ENCODE measurements at regions of chr2 and their contacts with region 1.

Region 1: DNA sequence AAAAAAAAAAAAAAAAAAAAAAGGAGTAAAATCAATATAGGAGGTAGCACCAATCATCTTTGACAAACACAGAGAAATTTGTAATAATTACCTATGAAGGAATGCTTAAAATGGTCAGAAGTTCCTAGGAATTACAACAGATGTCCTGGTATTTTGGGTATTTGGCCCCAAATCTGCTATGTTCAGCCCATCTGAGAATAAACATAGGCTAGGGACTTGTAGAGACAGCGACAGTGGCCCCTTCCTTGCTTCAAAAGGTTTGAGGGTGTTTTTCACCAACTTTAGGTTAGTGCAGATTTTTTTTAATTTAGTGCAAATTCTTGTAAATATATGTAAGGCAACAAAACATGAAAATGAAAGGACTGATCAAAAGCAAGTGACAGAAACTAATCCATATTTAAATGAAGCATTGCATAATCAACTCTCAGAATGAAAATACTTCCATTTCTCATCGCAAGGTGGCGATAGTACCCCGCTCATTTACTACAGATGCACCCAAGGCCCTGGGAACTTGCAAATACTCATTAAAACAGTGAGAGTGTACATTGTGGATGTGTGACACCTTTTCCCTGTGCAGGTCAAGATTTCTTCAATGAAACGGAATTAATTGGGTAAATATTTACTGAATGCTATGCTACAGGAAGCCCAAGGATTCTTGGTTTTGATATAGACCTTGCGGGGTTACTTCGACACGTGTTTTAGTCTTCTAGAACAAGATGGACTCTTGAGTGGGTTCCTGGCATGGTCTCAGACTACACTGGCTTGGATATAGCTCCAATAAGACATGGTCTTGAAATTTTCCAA is 44.6 kb downstream of the FAM124B start:
- DNase-seq: peak; percentile 19 to 68 (median 59)
- ATAC-seq: peak; percentile 82
- H3K4me3 ChIP-seq: no peak overlapping the region
- H3K4me3 Mint-ChIP-seq: no peak overlapping the region
- H3K27ac ChIP-seq: no peak overlapping the region
- H3K27ac Mint-ChIP-seq: no peak overlapping the region
- H3K4me1 ChIP-seq: no peaks in the 10 kb centered on the region
- H3K4me1 Mint-ChIP-seq: peaks cover 0 to 2% (median 0%) of the 10 kb centered on the region in 7 donors
- H3K27me3 ChIP-seq: no peaks in the 10 kb centered on the region
- H3K27me3 Mint-ChIP-seq: peaks cover 8 to 20% (median 9%) of the 10 kb centered on the region in 5 donors

Region 2: DNA sequence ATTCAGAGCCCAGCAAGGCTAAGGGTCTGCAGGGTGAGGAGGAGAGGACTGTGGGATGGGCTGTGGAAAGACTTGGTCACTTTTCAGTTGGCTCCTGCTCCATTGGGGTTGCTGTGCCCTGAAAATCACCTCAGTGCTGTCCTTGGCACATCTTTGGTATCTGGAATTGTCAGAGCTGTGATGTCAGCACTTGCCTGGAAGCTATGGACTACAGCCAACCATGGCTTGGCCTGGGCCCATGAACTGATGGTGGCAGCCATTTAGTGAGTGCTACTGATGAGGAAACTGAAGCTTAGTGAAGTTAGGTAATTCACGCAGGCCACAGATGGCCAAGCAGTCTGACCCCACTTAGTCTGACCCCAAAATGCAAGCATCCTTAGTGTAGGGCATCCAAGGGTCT is 196.4 kb before region 1 on chr2:
- CTCF ChIA-PET with region 1: no interaction called
- POLR2A ChIA-PET with region 1: no interaction called
- intact Hi-C with region 1: no loop called
- DNase-seq: no peak
- ATAC-seq: no peak
- H3K4me3 ChIP-seq: no peak overlapping the region
- H3K4me3 Mint-ChIP-seq: no peak overlapping the region
- H3K27ac ChIP-seq: no peak overlapping the region
- H3K27ac Mint-ChIP-seq: no peak overlapping the region
- H3K4me1 ChIP-seq: no peaks in the 10 kb centered on the region
- H3K4me1 Mint-ChIP-seq: peaks cover 0 to 2% (median 0%) of the 10 kb centered on the region in 7 donors
- H3K27me3 ChIP-seq: no peaks in the 10 kb centered on the region
- H3K27me3 Mint-ChIP-seq: peaks cover 6 to 20% (median 10%) of the 10 kb centered on the region in 5 donors

Region 3: GRCh38 chr2:224319455-224320149 is 37.7 kb before region 1 on chr2:
- CTCF ChIA-PET with region 1: no interaction called
- POLR2A ChIA-PET with region 1: no interaction called
- intact Hi-C with region 1: no loop called
- DNase-seq: no peak
- ATAC-seq: peak; percentile 34
- H3K4me3 ChIP-seq: no peak overlapping the region
- H3K4me3 Mint-ChIP-seq: no peak overlapping the region
- H3K27ac ChIP-seq: no peak overlapping the region
- H3K27ac Mint-ChIP-seq: no peak overlapping the region
- H3K4me1 ChIP-seq: no peaks in the 10 kb centered on the region
- H3K4me1 Mint-ChIP-seq: no peaks in the 10 kb centered on the region
- H3K27me3 ChIP-seq: no peaks in the 10 kb centered on the region
- H3K27me3 Mint-ChIP-seq: peaks cover 14 to 39% (median 20%) of the 10 kb centered on the region in 5 donors

Region 4: GRCh38 chr2:224449212-224450147 is 92.2 kb after region 1 on chr2:
- CTCF ChIA-PET with region 1: no interaction called
- POLR2A ChIA-PET with region 1: no interaction called
- intact Hi-C with region 1: loop called (anchors 1 to 2 kb)
- DNase-seq: peak in 2 of 9 donors; percentile 10 to 15
- ATAC-seq: peak; percentile 61
- H3K4me3 ChIP-seq: no peak overlapping the region
- H3K4me3 Mint-ChIP-seq: no peak overlapping the region
- H3K27ac ChIP-seq: no peak overlapping the region
- H3K27ac Mint-ChIP-seq: no peak overlapping the region
- H3K4me1 ChIP-seq: no peaks in the 10 kb centered on the region
- H3K4me1 Mint-ChIP-seq: no peaks in the 10 kb centered on the region
- H3K27me3 ChIP-seq: no peaks in the 10 kb centered on the region
- H3K27me3 Mint-ChIP-seq: peaks cover 4 to 24% (median 8%) of the 10 kb centered on the region in 5 donors

Region 5: GRCh38 chr2:225290757-225291400 is 933.6 kb after region 1 on chr2:
- CTCF ChIA-PET with region 1: no interaction called
- POLR2A ChIA-PET with region 1: no interaction called
- intact Hi-C with region 1: no loop called
- DNase-seq: no peak
- ATAC-seq: no peak
- H3K4me3 ChIP-seq: no peak overlapping the region
- H3K4me3 Mint-ChIP-seq: no peak overlapping the region
- H3K27ac ChIP-seq: no peak overlapping the region
- H3K27ac Mint-ChIP-seq: no peak overlapping the region
- H3K4me1 ChIP-seq: no peaks in the 10 kb centered on the region
- H3K4me1 Mint-ChIP-seq: no peaks in the 10 kb centered on the region
- H3K27me3 ChIP-seq: no peaks in the 10 kb centered on the region
- H3K27me3 Mint-ChIP-seq: peaks cover 0 to 14% (median 0%) of the 10 kb centered on the region in 5 donors